Activated CD8-positive, alpha-beta T cell treated with anti-CD3 and anti-CD28 coated beads for 36 hours (primary cell): ENCODE measurements at regions of chr7 and their contacts with region 1.

Region 1: DNA sequence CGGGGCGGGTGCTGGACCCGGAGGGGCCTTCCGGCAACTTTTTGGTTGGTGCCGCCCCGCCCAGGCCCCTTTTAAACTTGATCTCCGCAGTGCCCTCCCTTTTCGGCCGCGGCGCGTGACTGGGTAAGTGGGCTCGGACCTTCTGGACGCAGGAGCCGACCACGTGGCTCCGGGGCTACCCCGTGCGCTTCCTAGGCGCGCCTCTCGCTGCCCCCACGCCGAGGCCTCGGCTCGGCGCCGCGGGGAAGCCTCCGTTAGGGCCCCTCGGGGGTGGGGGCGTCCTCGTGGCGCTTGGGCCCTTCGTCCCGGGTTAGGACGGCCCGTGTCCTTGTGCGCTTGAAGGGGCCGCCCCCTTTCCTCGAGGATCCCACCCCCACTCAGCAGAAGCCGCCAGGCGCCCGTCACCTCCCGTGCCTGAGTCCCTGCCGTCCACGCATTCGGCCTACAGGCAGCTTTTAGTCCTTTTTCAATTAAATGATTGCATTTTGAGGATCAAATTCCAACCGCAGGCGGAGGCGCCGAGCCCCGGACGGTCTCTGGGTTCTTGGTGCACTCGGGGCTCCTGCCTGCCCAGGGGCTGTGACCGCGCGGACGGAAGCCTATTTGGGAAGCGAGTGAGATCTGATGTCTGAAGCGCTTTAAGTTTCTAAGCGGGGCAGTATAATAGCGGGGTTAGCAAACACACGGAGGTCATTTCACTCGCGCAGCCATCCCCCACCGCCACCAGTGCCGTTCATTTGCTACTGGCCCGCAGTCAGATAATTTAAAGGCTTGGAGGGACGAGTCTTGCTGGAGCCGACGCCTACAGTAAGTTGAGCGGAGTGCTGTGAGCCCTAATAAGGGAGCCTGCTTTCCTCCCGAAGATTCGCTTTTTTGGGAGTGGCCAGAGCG is 31.8 kb upstream of the TOMM7 start:
- DNase-seq: peak; percentile 87
- ATAC-seq: peak; percentile 82
- H3K4me3 Mint-ChIP-seq: peak overlapping the region; percentile 88
- H3K27ac Mint-ChIP-seq: peak overlapping the region; percentile 85
- H3K4me1 Mint-ChIP-seq: peaks cover 33% of the 10 kb centered on the region
- H3K27me3 Mint-ChIP-seq: no peaks in the 10 kb centered on the region
- CTCF ChIP-seq: peak; percentile 87

Region 2: DNA sequence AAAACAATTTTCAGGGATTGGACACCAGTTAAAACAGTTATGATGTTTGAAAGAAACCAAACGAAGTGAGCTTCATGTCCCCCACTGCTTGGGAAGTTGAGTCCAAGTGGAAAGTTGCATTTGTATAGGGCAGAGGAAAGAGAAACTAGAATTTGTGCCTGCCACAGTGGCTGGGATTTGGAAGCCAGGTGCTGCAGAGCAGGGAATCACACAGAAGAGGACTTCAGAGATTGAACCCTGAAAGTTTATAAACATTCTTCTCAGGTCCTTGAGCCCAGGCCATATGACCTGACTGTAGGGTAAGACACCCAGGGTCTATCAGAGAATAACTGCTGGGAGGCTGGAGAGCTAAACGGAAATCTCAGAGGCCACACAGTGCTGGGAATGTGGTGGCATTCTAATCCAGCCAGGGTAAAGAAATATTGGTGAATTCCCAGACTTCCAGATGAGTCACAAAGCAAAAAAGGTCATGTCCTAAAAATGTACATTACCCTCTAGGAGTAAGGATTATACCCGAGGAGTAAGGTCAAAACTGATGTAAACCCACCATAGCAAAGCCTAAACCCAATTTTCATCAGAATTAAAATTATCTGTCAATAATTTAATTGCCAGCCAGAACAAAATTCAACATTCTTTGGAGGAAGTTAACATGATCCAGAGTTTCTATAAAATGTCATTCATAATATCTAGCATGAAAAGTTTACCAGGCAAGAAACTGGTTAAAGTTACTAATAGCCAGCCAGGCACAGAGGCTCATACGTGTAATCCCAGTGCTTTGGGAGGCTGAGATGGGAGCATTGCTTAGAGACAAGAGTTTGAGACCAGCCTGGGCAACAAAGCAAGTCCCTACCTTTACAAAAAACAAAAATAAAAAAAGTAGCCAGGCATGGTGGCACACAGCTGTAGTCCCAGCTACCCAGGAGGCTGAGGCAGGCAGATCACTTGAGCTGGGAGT is 62.9 kb before region 1 on chr7:
- CTCF ChIA-PET with region 1: no interaction called
- POLR2A ChIA-PET with region 1: no interaction called
- intact Hi-C with region 1: no loop called
- DNase-seq: no peak
- ATAC-seq: no peak
- H3K4me3 Mint-ChIP-seq: no peak overlapping the region
- H3K27ac Mint-ChIP-seq: no peak overlapping the region
- H3K4me1 Mint-ChIP-seq: no peaks in the 10 kb centered on the region
- H3K27me3 Mint-ChIP-seq: no peaks in the 10 kb centered on the region
- CTCF ChIP-seq: no peak

Region 3: DNA sequence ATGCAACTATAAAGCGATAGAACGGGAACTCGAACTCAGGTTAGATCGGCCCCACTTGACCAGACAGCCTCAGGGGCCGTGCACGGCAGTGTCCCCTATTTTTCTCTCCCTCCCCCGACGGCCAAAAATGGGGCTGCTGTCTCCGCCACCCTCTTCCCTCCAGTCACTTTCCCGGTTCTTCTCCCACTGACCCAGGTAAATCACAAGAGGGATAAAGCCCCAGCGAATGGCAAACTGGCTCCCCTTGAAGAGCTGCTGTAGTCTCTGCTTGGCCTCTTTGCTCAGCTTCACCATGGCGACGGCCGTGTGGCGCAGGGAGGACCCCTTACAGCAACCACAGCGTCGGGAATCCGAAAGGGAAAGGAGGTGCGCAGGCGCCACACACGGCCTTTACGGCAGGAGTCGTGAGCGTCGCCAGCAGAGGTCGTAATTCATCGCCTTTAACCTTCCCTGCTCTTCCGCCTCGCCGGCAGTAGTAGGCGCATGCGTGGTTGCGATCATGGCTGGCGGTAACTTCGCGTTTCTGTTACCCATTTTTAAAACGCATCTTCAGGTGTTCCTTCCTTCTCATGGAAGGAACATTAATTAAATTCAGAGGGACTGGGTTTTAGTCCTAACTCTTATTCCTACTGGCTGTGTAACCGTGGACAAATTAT is 31.8 kb before region 1 on chr7 and contains the start of gene TOMM7:
- CTCF ChIA-PET with region 1: no interaction called
- POLR2A ChIA-PET with region 1: interaction called, 3 read pairs
- intact Hi-C with region 1: loop called (anchors 5 kb)
- DNase-seq: peak; percentile 91
- ATAC-seq: peak; percentile 95
- H3K4me3 Mint-ChIP-seq: peak within 1 kb of the TSS; percentile 99
- H3K27ac Mint-ChIP-seq: peak within 1 kb of the TSS; percentile 98
- H3K4me1 Mint-ChIP-seq: peaks cover 37% of the 10 kb centered on the region
- H3K27me3 Mint-ChIP-seq: peaks cover 13% of the 10 kb centered on the region
- CTCF ChIP-seq: no peak
- total RNA-seq, gene TOMM7: 206 to 240 TPM

Region 4: GRCh38 chr7:22885797-22886261 is 31.4 kb after region 1 on chr7:
- CTCF ChIA-PET with region 1: interaction called, 7 read pairs
- POLR2A ChIA-PET with region 1: interaction called, 22 read pairs
- intact Hi-C with region 1: no loop called
- DNase-seq: peak; percentile 85
- ATAC-seq: peak; percentile 84
- H3K4me3 Mint-ChIP-seq: peak overlapping the region; percentile 53
- H3K27ac Mint-ChIP-seq: peak overlapping the region; percentile 97
- H3K4me1 Mint-ChIP-seq: peaks cover 45% of the 10 kb centered on the region
- H3K27me3 Mint-ChIP-seq: no peaks in the 10 kb centered on the region
- CTCF ChIP-seq: no peak

Region 5: DNA sequence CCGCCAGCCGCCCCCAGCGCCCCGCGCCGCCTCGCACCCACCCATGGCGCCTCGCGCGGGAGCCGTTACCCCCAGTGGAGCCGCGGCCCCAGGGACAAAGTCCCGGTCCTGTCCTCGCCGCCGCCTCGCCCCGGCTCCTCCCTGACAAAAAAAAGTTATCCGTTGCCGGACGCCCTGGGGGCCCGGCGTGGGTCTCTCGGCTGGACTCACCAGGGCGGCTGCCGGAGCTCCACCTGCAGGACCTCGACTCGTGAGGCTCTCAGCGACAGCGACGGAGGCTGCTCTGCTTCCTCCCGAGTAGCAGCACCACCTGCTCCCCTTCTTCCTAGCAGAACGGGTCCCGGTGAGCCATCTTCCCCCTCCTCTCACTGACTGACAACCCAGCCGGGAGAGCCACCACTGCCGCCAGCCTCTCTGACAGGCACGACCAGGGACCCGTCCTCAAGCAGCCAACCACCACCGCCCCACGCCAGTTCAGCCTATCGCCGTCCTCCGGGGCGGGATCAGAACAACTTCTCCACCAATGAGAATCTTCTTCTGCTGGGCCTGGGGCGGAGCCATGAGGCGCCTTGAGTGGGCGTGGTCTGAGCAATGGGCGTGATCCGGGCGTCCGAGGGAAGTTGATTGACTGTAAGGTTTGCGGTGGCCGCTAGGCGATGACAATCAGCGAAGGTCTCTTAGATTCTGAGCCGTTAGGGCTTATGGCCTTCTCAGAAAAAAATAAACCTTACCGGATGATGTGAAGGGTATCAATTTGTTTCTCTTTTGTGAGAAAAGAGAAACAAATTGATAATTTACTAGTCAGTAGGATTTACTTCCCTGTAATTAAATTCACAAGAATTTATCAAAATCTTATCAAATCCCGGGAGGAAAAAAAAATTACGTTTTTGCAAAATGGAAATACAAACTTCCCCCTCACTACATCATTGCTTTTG is 159.6 kb after region 1 on chr7 and contains the start of gene HYCC1:
- CTCF ChIA-PET with region 1: no interaction called
- POLR2A ChIA-PET with region 1: no interaction called
- intact Hi-C with region 1: loop called (anchors 10 kb)
- DNase-seq: peak; percentile 100
- ATAC-seq: peak; percentile 99
- H3K4me3 Mint-ChIP-seq: peak within 1 kb of the TSS; percentile 82
- H3K27ac Mint-ChIP-seq: peak within 1 kb of the TSS; percentile 86
- H3K4me1 Mint-ChIP-seq: peaks cover 18% of the 10 kb centered on the region
- H3K27me3 Mint-ChIP-seq: no peaks in the 10 kb centered on the region
- CTCF ChIP-seq: peak; percentile 66
- total RNA-seq, gene HYCC1: 17.8 to 18.5 TPM